GM12878 (cell line): ENCODE measurements at regions of chr11 and their contacts with region 1.

Region 1: GRCh38 chr11:117226388-117227385 is 5.2 kb downstream of the PCSK7 start:
- DNase-seq: peak; percentile 35
- ATAC-seq: peak; percentile 79
- H3K4me3 ChIP-seq: no peak overlapping the region
- H3K27ac ChIP-seq: no peak overlapping the region
- H3K4me1 ChIP-seq: peaks cover 9% of the 10 kb centered on the region
- H3K27me3 ChIP-seq: no peaks in the 10 kb centered on the region
- CTCF ChIP-seq: peak; percentile 74 to 90 (median 80); a peak in 5 of 6 replicates
- EP300 ChIP-seq: no peak
- POLR2A ChIP-seq: no peak
- RAD21 ChIP-seq: peak; percentile 90

Region 2: DNA sequence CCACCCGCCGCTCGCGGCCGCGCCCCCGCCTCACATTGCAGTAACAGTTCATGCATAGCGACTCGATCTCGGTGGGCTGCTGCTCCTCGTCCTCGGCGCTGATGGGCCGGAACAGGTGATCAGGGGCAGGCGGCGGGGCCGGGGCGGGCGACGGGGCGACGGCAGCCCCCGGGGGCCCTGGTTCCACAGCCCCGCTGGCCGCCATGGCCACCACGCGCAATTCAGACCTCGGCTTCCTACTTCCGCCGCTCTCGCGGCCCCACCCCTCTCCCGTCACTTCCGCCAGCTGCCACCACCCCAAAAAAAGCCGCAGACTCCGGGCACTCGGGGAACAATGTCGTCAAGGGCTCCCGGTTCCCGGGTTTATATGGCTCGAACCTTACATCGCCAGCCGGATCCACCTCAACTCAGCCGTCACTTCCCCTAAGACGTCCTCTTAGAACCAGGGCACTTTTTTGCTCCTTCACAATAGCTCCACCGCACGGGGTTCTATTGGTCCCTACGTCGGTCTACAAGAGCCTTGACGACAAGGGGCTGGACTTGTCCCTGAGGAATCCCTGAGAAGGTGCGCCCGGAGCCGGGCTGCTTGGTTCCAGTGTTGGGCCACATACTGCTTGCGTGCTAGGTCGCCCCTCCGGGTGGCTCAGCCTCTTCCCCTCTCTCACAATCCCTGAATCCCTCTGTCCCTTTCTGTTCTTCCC is 438.8 kb before region 1 on chr11 and contains the start of gene ZPR1:
- CTCF ChIA-PET with region 1: interaction called, 4 read pairs
- POLR2A ChIA-PET with region 1: no interaction called
- RAD21 ChIA-PET with region 1: interaction called, 10 read pairs
- SMC1A ChIA-PET with region 1: interaction called, 4 read pairs
- in situ Hi-C with region 1: no loop called
- intact Hi-C with region 1: loop called (anchors 5 kb)
- DNase-seq: no peak
- ATAC-seq: peak; percentile 86
- H3K4me3 ChIP-seq: peak within 1 kb of the TSS; percentile 96
- H3K27ac ChIP-seq: peak within 1 kb of the TSS; percentile 72
- H3K4me1 ChIP-seq: peaks cover 18% of the 10 kb centered on the region
- H3K27me3 ChIP-seq: no peaks in the 10 kb centered on the region
- CTCF ChIP-seq: no peak
- EP300 ChIP-seq: no peak
- POLR2A ChIP-seq: peak; percentile 96
- RAD21 ChIP-seq: no peak
- polyA plus RNA-seq, gene ZPR1: 9.3 to 20.4 TPM

Region 3: GRCh38 chr11:116879800-116880625 is 346.7 kb before region 1 on chr11:
- CTCF ChIA-PET with region 1: interaction called, 21 read pairs
- POLR2A ChIA-PET with region 1: no interaction called
- RAD21 ChIA-PET with region 1: interaction called, 6 read pairs
- SMC1A ChIA-PET with region 1: interaction called, 5 read pairs
- in situ Hi-C with region 1: loop called (anchors 5 kb)
- intact Hi-C with region 1: loop called (anchors 2 kb)
- DNase-seq: peak; percentile 42
- ATAC-seq: peak; percentile 96
- H3K4me3 ChIP-seq: no peak overlapping the region
- H3K27ac ChIP-seq: no peak overlapping the region
- H3K4me1 ChIP-seq: no peaks in the 10 kb centered on the region
- H3K27me3 ChIP-seq: no peaks in the 10 kb centered on the region
- CTCF ChIP-seq: peak; percentile 62 to 72 (median 71); a peak in 5 of 6 replicates
- EP300 ChIP-seq: no peak
- POLR2A ChIP-seq: no peak
- RAD21 ChIP-seq: peak; percentile 87

Region 4: DNA sequence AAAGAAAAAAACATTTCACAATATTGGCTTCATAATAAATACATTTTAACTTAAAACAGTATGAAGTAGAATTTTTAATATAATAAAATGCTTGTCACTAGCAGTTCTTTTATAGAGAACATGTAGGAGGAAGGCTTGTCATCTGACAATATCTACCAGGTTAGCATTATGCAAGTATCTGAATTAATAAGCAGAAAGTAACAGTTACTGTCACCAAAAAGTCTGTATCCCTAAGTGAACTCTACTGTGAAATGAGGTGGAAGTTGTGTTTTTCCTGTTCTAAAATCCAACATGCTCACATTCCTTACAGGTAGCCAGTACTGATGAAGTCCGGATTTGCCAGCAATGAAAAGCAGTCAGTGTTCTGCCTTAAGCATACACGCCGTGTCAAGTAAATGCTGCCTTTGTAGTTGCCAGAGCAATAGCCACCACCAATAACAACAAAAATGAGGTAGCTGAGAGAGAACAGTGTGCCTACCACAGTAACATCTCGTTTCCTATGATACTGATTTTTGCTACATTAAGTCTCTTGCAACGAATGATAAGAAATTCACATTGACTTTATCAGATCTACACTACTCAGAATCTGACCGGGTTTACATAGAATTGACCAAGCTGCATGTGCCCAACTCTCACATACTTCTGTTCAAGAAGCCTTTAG is 223.9 kb before region 1 on chr11:
- CTCF ChIA-PET with region 1: no interaction called
- POLR2A ChIA-PET with region 1: no interaction called
- RAD21 ChIA-PET with region 1: no interaction called
- SMC1A ChIA-PET with region 1: no interaction called
- in situ Hi-C with region 1: no loop called
- intact Hi-C with region 1: no loop called
- DNase-seq: no peak
- ATAC-seq: peak; percentile 32
- H3K4me3 ChIP-seq: no peak overlapping the region
- H3K27ac ChIP-seq: no peak overlapping the region
- H3K4me1 ChIP-seq: peaks cover 13% of the 10 kb centered on the region
- H3K27me3 ChIP-seq: no peaks in the 10 kb centered on the region
- CTCF ChIP-seq: no peak
- EP300 ChIP-seq: no peak
- POLR2A ChIP-seq: no peak
- RAD21 ChIP-seq: no peak

Region 5: DNA sequence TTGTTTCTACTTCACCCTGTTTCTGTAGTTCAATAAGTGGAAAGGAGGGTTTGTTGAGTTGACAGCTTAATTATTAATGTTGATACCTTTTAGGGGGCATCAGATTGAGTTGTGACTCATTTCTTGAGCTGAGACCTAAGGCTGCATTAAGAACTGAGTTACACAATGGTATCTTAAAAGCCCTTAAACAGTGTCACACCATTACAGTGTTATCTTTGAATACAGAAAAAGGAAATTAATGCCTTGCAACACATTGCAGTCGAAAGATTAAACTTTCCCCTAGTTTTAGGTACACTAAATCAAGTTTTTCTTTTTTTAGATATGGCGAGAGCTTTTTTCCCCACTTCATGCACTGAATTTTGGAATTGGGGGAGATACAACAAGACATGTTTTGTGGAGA is 65.9 kb before region 1 on chr11:
- CTCF ChIA-PET with region 1: interaction called, 10 read pairs
- POLR2A ChIA-PET with region 1: interaction called, 5 read pairs
- RAD21 ChIA-PET with region 1: no interaction called
- SMC1A ChIA-PET with region 1: interaction called, 7 read pairs
- in situ Hi-C with region 1: no loop called
- intact Hi-C with region 1: no loop called
- DNase-seq: no peak
- ATAC-seq: peak; percentile 81
- H3K4me3 ChIP-seq: no peak overlapping the region
- H3K27ac ChIP-seq: 0 out of 2 replicates have a peak overlapping the region, but pooled peaks have one; percentile 11
- H3K4me1 ChIP-seq: peaks cover 13% of the 10 kb centered on the region
- H3K27me3 ChIP-seq: no peaks in the 10 kb centered on the region
- CTCF ChIP-seq: no peak
- EP300 ChIP-seq: no peak
- POLR2A ChIP-seq: no peak
- RAD21 ChIP-seq: no peak

Region 6: DNA sequence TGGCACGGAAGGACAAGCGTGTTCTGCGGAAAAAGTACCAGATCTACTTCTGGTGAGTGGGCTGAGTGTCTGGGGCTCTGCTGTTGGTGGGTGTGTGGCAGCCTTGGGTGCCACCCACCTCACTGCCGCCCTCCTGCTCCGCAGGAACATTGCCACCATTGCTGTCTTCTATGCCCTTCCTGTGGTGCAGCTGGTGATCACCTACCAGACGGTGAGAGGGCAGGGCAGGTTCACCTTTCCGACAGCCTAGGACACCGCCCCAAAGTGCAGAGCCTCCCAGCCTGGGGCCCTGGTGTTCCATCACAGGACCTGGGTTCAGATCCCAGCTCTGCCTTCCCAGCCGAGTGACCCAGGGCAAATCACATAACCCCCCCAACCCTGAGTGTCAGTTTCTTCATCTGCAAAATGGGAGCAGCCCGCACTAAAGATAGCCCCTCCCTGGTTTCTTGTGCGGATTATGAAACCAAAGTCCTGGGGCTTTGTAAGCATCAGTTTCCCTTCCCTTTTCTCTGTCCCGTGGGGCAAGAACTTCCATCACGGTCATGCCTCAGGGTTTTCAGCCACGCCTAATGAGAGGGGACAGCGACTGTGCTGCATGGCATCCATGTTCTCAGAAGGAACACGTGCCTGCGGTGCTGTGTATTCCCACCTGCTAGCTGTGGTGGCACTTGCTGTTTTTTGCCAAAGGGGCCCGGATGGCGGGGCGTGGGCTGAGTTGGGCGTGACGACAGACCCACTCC is 37.3 kb before region 1 on chr11:
- CTCF ChIA-PET with region 1: interaction called, 422 read pairs
- POLR2A ChIA-PET with region 1: interaction called, 3 read pairs
- RAD21 ChIA-PET with region 1: interaction called, 3 read pairs
- SMC1A ChIA-PET with region 1: interaction called, 11 read pairs
- in situ Hi-C with region 1: no loop called
- intact Hi-C with region 1: no loop called
- DNase-seq: peak; percentile 68
- ATAC-seq: peak; percentile 89
- H3K4me3 ChIP-seq: no peak overlapping the region; the same call in 1 of the 2 replicates
- H3K27ac ChIP-seq: peak overlapping the region; percentile 89
- H3K4me1 ChIP-seq: peaks cover 36% of the 10 kb centered on the region
- H3K27me3 ChIP-seq: no peaks in the 10 kb centered on the region
- CTCF ChIP-seq: no peak
- EP300 ChIP-seq: peak; percentile 69 to 74; a peak in 1 of 4 replicates
- POLR2A ChIP-seq: no peak
- RAD21 ChIP-seq: no peak

Region 7: GRCh38 chr11:117273550-117274289 is 47.0 kb after region 1 on chr11:
- CTCF ChIA-PET with region 1: no interaction called
- POLR2A ChIA-PET with region 1: no interaction called
- RAD21 ChIA-PET with region 1: no interaction called
- SMC1A ChIA-PET with region 1: no interaction called
- in situ Hi-C with region 1: no loop called
- intact Hi-C with region 1: no loop called
- DNase-seq: no peak
- ATAC-seq: no peak
- H3K4me3 ChIP-seq: no peak overlapping the region
- H3K27ac ChIP-seq: no peak overlapping the region
- H3K4me1 ChIP-seq: no peaks in the 10 kb centered on the region
- H3K27me3 ChIP-seq: no peaks in the 10 kb centered on the region
- CTCF ChIP-seq: no peak
- EP300 ChIP-seq: no peak
- POLR2A ChIP-seq: no peak
- RAD21 ChIP-seq: no peak